H1 (cell line): ENCODE measurements at regions of chr9 and their contacts with region 1.

Region 1: GRCh38 chr9:33452828-33453271 is 5.5 kb upstream of the AQP3 start:
- DNase-seq: peak; percentile 68 to 88
- H3K4me3 ChIP-seq: no peak overlapping the region
- H3K27ac ChIP-seq: no peak overlapping the region
- H3K4me1 ChIP-seq: peaks cover 0 to 13% (median 8%) of the 10 kb centered on the region in 4 experiments; a peak in 6 of 7 replicates
- H3K27me3 ChIP-seq: peaks cover 0 to 10% (median 5%) of the 10 kb centered on the region in 4 experiments; a peak in 5 of 7 replicates
- CTCF ChIP-seq: peak; percentile 77 to 90 (median 86)
- EP300 ChIP-seq: no peak
- POLR2A ChIP-seq: peak in 1 of 2 experiments; percentile 46; a peak in 1 of 3 replicates
- RAD21 ChIP-seq: peak; percentile 79 to 85

Region 2: DNA sequence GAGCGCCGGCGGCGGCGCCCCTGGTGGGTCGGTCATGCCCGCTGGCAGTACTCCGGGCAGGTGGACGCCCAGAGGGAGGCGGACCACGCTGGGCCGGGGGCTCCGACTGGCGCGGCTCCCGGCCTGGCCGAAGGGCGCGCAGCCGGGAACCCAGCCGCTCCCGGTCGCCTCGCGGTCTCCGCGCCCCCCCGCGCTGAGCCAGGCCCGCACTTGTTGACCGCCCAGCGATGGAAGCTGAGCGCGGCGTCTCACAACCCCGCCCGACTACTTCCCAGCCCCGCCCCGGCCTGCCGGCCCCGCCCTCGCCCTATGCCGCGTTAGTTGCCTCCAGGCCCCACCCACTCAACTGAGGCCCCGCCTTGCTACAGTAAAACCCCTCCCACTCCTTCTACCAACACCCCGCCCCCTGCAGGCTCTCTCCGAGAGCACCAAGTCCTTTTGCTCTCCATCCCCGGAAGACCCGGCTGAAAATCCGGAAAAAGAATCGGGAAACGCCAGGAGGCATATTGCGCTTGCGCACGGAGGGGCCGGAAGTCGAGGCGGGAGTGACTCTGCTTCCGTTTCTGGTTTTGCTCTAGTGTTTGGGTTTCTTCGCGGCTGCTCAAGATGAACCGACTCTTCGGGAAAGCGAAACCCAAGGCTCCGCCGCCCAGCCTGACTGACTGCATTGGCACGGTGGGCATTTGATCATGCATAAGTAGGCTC is 188.2 kb before region 1 on chr9 and contains the starts of genes BAG1 and CHMP5:
- CTCF ChIA-PET with region 1: no interaction called
- POLR2A ChIA-PET with region 1: no interaction called
- DNase-seq: peak; percentile 99
- H3K4me3 ChIP-seq: peak within 1 kb of the TSS; percentile 86 to 99 (median 96)
- H3K27ac ChIP-seq: peak within 1 kb of the TSS; percentile 31
- H3K4me1 ChIP-seq: peaks cover 0 to 2% (median 2%) of the 10 kb centered on the region in 4 experiments; a peak in 2 of 7 replicates
- H3K27me3 ChIP-seq: no peaks in the 10 kb centered on the region
- CTCF ChIP-seq: peak; percentile 8 to 33 (median 23); a peak in 2 of 4 replicates
- EP300 ChIP-seq: no peak
- POLR2A ChIP-seq: peak in 1 of 2 experiments; percentile 66; a peak in 1 of 3 replicates
- RAD21 ChIP-seq: no peak
- total RNA-seq, gene BAG1: 59.8 and 61.5 TPM in 2 replicates
- total RNA-seq, gene CHMP5: 44.1 and 47.3 TPM in 2 replicates

Region 3: DNA sequence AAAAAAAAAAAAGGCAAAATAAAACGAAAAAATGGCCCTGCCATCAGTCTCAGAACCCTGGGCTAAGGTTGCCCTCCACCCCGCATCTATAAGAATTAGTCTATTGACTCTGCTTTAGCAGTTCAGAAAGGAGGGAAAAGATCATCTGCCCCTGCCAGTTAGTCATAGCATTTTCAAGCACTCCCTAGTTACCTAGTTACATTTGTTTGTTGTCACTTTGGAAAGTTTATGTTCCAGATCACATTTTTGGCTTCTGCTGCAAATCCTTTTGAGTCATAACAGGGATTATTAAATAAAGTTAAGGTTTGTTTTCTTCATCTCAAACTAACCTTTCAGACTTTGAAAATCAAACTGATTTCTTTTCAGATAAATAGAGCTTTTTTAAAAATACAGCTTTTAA is 102.5 kb before region 1 on chr9:
- CTCF ChIA-PET with region 1: interaction called, 15 read pairs
- POLR2A ChIA-PET with region 1: no interaction called
- DNase-seq: no peak
- H3K4me3 ChIP-seq: no peak overlapping the region
- H3K27ac ChIP-seq: no peak overlapping the region
- H3K4me1 ChIP-seq: no peaks in the 10 kb centered on the region
- H3K27me3 ChIP-seq: no peaks in the 10 kb centered on the region
- CTCF ChIP-seq: no peak
- EP300 ChIP-seq: no peak
- POLR2A ChIP-seq: no peak
- RAD21 ChIP-seq: no peak

Region 4: GRCh38 chr9:33381231-33381791 is 71.5 kb before region 1 on chr9:
- CTCF ChIA-PET with region 1: interaction called, 154 read pairs
- POLR2A ChIA-PET with region 1: interaction called, 3 read pairs
- DNase-seq: peak; percentile 70 to 85
- H3K4me3 ChIP-seq: peak overlapping the region in 2 of 4 experiments; percentile 7 to 38; a peak in 1 of 8 replicates
- H3K27ac ChIP-seq: peak overlapping the region; percentile 65
- H3K4me1 ChIP-seq: peaks cover 2 to 6% (median 5%) of the 10 kb centered on the region in 4 experiments; a peak in 5 of 7 replicates
- H3K27me3 ChIP-seq: no peaks in the 10 kb centered on the region
- CTCF ChIP-seq: no peak
- EP300 ChIP-seq: peak in 1 of 2 experiments; percentile 87; a peak in 1 of 3 replicates
- POLR2A ChIP-seq: no peak
- RAD21 ChIP-seq: no peak

Region 5: DNA sequence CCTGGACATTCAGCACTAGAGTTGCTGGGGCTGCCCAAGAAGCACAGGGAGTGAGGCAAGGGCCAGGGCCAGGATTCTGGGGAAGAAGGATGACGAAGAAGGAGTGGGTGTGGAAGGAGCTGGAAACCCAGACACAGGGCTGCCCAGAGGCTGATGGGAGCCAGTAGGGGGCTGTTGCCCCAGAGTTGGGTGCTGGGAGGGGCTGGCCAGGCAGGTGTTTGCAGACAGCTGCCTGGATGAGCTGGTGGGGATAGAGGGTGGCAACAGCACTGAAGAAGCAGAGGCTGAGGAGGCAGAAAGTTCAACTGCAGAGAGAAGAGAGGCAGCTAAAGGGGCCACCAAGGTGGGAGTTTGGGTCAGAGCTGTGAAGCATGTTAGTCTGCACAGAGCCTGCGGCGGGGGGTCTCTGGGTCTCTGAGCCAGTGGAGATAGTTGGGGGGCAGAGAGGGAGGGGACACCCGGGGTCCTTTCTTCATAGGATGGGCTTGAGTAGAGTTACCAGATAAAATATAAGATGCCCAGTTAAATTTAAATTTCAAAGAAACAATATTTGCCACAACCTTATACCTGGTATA is 48.0 kb before region 1 on chr9:
- CTCF ChIA-PET with region 1: interaction called, 134 read pairs
- POLR2A ChIA-PET with region 1: interaction called, 6 read pairs
- DNase-seq: no peak
- H3K4me3 ChIP-seq: no peak overlapping the region
- H3K27ac ChIP-seq: no peak overlapping the region
- H3K4me1 ChIP-seq: no peaks in the 10 kb centered on the region
- H3K27me3 ChIP-seq: no peaks in the 10 kb centered on the region
- CTCF ChIP-seq: no peak
- EP300 ChIP-seq: no peak
- POLR2A ChIP-seq: no peak
- RAD21 ChIP-seq: no peak

Region 6: DNA sequence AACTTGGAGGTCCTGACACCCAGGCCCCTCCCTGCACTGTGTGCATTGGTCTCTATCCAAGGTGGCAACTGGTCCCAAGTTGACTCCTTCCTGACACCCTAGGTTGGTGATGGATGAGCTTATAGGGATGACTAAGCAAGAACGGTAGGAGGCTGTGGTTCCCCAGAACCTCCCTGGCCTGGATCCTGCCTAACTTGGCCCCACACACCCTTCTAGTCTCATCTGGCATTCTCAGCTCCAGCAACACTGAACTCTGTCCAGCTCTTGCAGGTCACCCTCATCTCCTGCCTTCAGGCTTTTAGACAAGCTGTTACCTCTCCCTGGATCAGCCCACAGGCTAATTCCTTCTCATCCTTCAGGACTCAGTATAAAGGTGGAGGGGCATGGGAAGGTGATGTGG is 21.9 kb before region 1 on chr9:
- CTCF ChIA-PET with region 1: interaction called, 45 read pairs
- POLR2A ChIA-PET with region 1: no interaction called
- DNase-seq: no peak
- H3K4me3 ChIP-seq: no peak overlapping the region
- H3K27ac ChIP-seq: no peak overlapping the region
- H3K4me1 ChIP-seq: peaks cover 0 to 2% (median 0%) of the 10 kb centered on the region in 4 experiments; a peak in 1 of 7 replicates
- H3K27me3 ChIP-seq: no peaks in the 10 kb centered on the region
- CTCF ChIP-seq: no peak
- EP300 ChIP-seq: no peak
- POLR2A ChIP-seq: no peak
- RAD21 ChIP-seq: no peak

Region 7: DNA sequence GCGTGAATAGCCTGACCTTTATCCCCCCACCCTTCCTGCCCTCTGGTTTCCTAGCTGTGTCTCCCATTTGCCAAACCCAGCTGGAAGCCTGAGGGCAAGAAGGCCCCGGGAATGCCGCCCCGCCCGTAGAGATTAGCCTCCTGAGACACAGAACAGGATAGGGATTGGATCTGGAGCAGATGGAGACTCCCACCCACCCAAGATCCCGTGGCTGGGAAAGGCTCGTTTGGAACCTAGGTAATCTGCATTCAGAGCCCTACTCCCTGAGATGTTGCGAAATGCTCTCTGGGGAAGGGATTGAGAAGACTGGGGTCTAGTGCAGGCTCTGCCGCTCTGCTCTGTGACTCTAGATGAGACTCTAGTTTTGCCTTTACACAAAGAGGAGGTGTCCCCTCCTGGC is 16.4 kb before region 1 on chr9:
- CTCF ChIA-PET with region 1: interaction called, 47 read pairs
- POLR2A ChIA-PET with region 1: interaction called, 8 read pairs
- DNase-seq: no peak
- H3K4me3 ChIP-seq: no peak overlapping the region
- H3K27ac ChIP-seq: no peak overlapping the region
- H3K4me1 ChIP-seq: peaks cover 0 to 5% (median 0%) of the 10 kb centered on the region in 4 experiments; a peak in 3 of 7 replicates
- H3K27me3 ChIP-seq: no peaks in the 10 kb centered on the region; a peak in 1 of 7 replicates
- CTCF ChIP-seq: no peak
- EP300 ChIP-seq: no peak
- POLR2A ChIP-seq: no peak
- RAD21 ChIP-seq: no peak

Region 8: DNA sequence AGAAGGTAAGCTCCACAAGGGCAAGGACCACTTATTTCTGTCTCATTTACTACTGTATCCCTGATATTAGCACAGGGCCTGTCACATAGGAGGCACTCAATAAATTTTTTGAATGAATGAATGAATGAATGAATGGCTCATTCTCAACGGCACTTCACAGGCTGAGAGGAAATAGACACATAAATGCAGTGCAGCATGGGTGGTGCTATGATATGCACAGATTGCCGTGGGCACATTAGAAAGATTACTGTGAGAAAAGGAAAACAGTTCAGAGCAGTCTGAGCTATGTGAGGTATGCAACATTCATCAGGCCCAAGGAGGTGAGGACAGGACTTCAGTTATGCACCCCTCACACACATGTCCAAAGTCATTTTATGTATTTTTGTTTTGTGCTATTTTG is 27.2 kb after region 1 on chr9:
- CTCF ChIA-PET with region 1: interaction called, 358 read pairs
- POLR2A ChIA-PET with region 1: interaction called, 3 read pairs
- DNase-seq: peak in 1 of 2 experiments; percentile 10
- H3K4me3 ChIP-seq: no peak overlapping the region
- H3K27ac ChIP-seq: no peak overlapping the region
- H3K4me1 ChIP-seq: no peaks in the 10 kb centered on the region
- H3K27me3 ChIP-seq: no peaks in the 10 kb centered on the region
- CTCF ChIP-seq: no peak
- EP300 ChIP-seq: no peak
- POLR2A ChIP-seq: no peak
- RAD21 ChIP-seq: no peak

Region 9: DNA sequence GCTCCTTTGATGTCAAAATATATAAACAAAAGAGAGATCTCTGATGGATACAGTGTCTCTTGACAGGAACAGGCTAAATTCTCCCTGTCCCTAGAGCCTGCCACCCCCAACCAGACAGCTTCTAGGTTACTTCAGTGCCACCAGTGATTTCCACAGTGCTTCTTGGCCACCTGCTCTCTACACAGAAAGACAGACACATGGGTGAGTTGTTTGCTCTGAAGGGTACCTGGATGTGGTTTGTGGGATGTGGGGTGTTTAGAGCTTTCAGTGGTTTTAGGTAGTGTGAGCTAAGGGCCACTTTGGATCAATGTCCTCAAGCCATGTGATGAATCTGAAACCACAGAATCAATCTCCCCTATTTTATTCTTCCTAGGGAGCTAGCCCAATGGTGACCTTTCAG is 196.6 kb after region 1 on chr9:
- CTCF ChIA-PET with region 1: no interaction called
- POLR2A ChIA-PET with region 1: no interaction called
- DNase-seq: no peak
- H3K4me3 ChIP-seq: no peak overlapping the region
- H3K27ac ChIP-seq: no peak overlapping the region
- H3K4me1 ChIP-seq: no peaks in the 10 kb centered on the region
- H3K27me3 ChIP-seq: no peaks in the 10 kb centered on the region
- CTCF ChIP-seq: no peak
- EP300 ChIP-seq: no peak
- POLR2A ChIP-seq: no peak
- RAD21 ChIP-seq: no peak